Naive thymus-derived CD4-positive, alpha-beta T cell (primary cell): ENCODE measurements at regions of chr22 and their contacts with region 1.

Region 1: GRCh38 chr22:20116951-20117645 is at the start of gene TRMT2A:
- DNase-seq: peak; percentile 93 to 98 (median 97)
- ATAC-seq: peak; percentile 93
- H3K4me3 ChIP-seq: peak within 1 kb of the TSS; percentile 96
- H3K4me3 Mint-ChIP-seq: peak within 1 kb of the TSS; percentile 72 to 98 (median 90)
- H3K27ac ChIP-seq: peak within 1 kb of the TSS; percentile 96
- H3K27ac Mint-ChIP-seq: peak within 1 kb of the TSS; percentile 80 to 97 (median 95)
- H3K4me1 ChIP-seq: peaks cover 23 to 24% of the 10 kb centered on the region in 2 donors
- H3K4me1 Mint-ChIP-seq: peaks cover 20 to 48% (median 39%) of the 10 kb centered on the region in 7 donors
- H3K27me3 ChIP-seq: no peaks in the 10 kb centered on the region
- H3K27me3 Mint-ChIP-seq: peaks cover 0 to 2% (median 0%) of the 10 kb centered on the region in 5 donors
- total RNA-seq, gene TRMT2A: 92.0 to 134 (median 95.8) TPM

Region 2: GRCh38 chr22:19854778-19855503 is 262.2 kb before region 1 on chr22 and contains the starts of genes GNB1L and RTL10:
- CTCF ChIA-PET with region 1: no interaction called
- POLR2A ChIA-PET with region 1: no interaction called
- intact Hi-C with region 1: loop called in 1 of 2 experiments (anchors 1 kb)
- DNase-seq: peak; percentile 91 to 97 (median 94)
- ATAC-seq: peak; percentile 97
- H3K4me3 ChIP-seq: peak within 1 kb of the TSS; percentile 64
- H3K4me3 Mint-ChIP-seq: peak within 1 kb of the TSS; percentile 94 to 99 (median 96)
- H3K27ac ChIP-seq: peak within 1 kb of the TSS; percentile 87
- H3K27ac Mint-ChIP-seq: peak within 1 kb of the TSS; percentile 90 to 96 (median 93)
- H3K4me1 ChIP-seq: peaks cover 19 to 21% of the 10 kb centered on the region in 2 donors
- H3K4me1 Mint-ChIP-seq: peaks cover 38 to 78% (median 65%) of the 10 kb centered on the region in 7 donors
- H3K27me3 ChIP-seq: no peaks in the 10 kb centered on the region
- H3K27me3 Mint-ChIP-seq: no peaks in the 10 kb centered on the region
- total RNA-seq, gene GNB1L: 4.2 to 14.1 (median 9.5) TPM
- total RNA-seq, gene RTL10: 18.2 to 36.8 (median 24.9) TPM

Region 3: DNA sequence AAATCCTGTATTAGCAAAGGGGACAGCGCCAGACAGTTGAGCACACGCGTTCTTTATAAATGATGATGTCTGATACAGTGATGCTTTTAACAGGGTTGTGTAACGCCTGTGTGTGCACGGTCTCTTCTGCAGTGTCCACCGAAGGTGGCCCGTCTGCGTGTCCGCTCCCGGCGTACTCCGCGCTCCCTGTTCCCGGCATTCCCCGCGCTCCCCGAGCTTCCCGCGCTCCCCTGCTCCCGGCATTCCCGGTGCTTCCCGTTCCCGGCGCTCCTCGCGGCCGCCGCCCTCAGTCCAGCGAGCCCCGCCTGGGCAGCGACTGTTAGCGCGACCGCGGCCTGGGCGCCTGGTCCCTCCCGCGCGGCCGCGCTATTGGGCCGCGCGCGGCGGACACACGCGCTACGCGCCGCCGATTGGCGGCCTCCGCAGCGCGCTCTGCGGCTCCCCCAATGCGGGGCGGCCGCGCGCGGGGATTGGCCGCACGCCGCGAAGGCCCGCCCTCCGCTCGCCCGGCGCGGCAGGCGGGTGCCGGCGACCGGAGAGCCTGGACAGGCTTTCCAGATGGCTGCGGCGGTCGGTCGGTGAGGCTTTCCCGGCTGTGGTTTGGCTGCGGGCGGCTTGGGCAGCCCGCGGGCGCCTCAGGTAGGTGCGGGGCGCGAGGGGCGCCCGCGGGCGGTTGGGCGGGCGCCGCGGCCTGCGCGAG is 37.2 kb before region 1 on chr22 and contains the start of gene DGCR8:
- CTCF ChIA-PET with region 1: no interaction called
- POLR2A ChIA-PET with region 1: interaction called, 3 read pairs
- intact Hi-C with region 1: loop called (anchors 1 kb)
- DNase-seq: peak; percentile 48 to 83 (median 75)
- ATAC-seq: peak; percentile 97
- H3K4me3 ChIP-seq: peak within 1 kb of the TSS; percentile 94
- H3K4me3 Mint-ChIP-seq: peak within 1 kb of the TSS; percentile 86 to 96 (median 90)
- H3K27ac ChIP-seq: peak within 1 kb of the TSS; percentile 74
- H3K27ac Mint-ChIP-seq: peak within 1 kb of the TSS; percentile 65 to 95 (median 81)
- H3K4me1 ChIP-seq: peaks cover 12 to 23% of the 10 kb centered on the region in 2 donors
- H3K4me1 Mint-ChIP-seq: peaks cover 29 to 45% (median 41%) of the 10 kb centered on the region in 7 donors
- H3K27me3 ChIP-seq: no peaks in the 10 kb centered on the region
- H3K27me3 Mint-ChIP-seq: no peaks in the 10 kb centered on the region
- total RNA-seq, gene DGCR8: 33.4 to 63.6 (median 41.1) TPM

Region 4: DNA sequence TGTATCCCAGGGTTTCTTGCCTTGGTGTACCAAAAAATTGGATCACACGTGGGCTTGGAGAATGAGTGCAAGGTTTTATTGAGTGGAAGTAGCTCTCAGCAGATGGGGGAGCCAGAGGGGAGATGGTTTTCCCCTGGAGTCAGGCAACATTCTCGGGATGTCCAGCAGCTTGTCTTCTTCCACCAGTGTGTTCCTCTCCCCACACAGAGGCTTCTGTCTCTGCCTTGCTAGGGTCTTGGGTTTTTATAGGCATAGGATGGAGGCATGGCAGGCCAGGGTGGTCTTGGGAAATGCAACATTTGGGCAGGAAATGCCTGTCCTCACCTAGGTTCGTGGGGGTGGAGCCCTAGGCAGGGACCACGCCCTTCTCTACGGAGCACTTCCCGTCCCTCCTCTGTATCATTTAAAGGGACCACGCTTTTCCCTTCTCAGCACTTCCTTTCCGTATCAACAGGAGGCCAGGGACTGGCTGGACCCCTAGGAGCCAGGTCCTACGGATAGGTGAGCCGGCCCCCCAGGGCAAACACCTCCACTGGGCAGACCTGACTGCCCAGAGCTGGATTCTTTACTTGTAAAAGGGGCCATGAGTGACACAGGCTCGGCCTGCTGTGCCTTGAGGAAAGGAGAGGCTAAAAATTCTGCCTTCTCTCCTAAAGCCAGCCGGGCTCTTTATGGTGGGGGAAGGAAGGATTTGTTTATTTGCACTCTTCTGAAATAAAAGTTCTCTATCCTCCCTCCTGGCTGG is 89.0 kb after region 1 on chr22:
- CTCF ChIA-PET with region 1: no interaction called
- POLR2A ChIA-PET with region 1: no interaction called
- intact Hi-C with region 1: loop called in 1 of 2 experiments (anchors 5 kb)
- DNase-seq: peak; percentile 35 to 75 (median 63)
- ATAC-seq: peak; percentile 91
- H3K4me3 ChIP-seq: peak overlapping the region; percentile 96
- H3K4me3 Mint-ChIP-seq: peak overlapping the region; percentile 85 to 98 (median 94)
- H3K27ac ChIP-seq: peak overlapping the region; percentile 83
- H3K27ac Mint-ChIP-seq: peak overlapping the region; percentile 91 to 97 (median 94)
- H3K4me1 ChIP-seq: peaks cover 16 to 24% of the 10 kb centered on the region in 2 donors
- H3K4me1 Mint-ChIP-seq: peaks cover 12 to 36% (median 25%) of the 10 kb centered on the region in 7 donors
- H3K27me3 ChIP-seq: no peaks in the 10 kb centered on the region
- H3K27me3 Mint-ChIP-seq: no peaks in the 10 kb centered on the region

Region 5: GRCh38 chr22:20858615-20859416 is 741.7 kb after region 1 on chr22 and contains the starts of genes PI4KA and SNAP29:
- CTCF ChIA-PET with region 1: no interaction called
- POLR2A ChIA-PET with region 1: no interaction called
- intact Hi-C with region 1: loop called in 1 of 2 experiments (anchors 2 kb)
- DNase-seq: peak; percentile 92 to 98 (median 96)
- ATAC-seq: peak; percentile 97
- H3K4me3 ChIP-seq: peak within 1 kb of the TSS; percentile 78
- H3K4me3 Mint-ChIP-seq: peak within 1 kb of the TSS; percentile 87 to 95 (median 92)
- H3K27ac ChIP-seq: peak within 1 kb of the TSS; percentile 87
- H3K27ac Mint-ChIP-seq: peak within 1 kb of the TSS; percentile 60 to 92 (median 88)
- H3K4me1 ChIP-seq: peaks cover 17 to 20% of the 10 kb centered on the region in 2 donors
- H3K4me1 Mint-ChIP-seq: peaks cover 38 to 76% (median 58%) of the 10 kb centered on the region in 7 donors
- H3K27me3 ChIP-seq: no peaks in the 10 kb centered on the region
- H3K27me3 Mint-ChIP-seq: no peaks in the 10 kb centered on the region
- total RNA-seq, gene PI4KA: 120 to 181 (median 168) TPM
- total RNA-seq, gene SNAP29: 15.2 to 32.8 (median 25.4) TPM

Region 6: DNA sequence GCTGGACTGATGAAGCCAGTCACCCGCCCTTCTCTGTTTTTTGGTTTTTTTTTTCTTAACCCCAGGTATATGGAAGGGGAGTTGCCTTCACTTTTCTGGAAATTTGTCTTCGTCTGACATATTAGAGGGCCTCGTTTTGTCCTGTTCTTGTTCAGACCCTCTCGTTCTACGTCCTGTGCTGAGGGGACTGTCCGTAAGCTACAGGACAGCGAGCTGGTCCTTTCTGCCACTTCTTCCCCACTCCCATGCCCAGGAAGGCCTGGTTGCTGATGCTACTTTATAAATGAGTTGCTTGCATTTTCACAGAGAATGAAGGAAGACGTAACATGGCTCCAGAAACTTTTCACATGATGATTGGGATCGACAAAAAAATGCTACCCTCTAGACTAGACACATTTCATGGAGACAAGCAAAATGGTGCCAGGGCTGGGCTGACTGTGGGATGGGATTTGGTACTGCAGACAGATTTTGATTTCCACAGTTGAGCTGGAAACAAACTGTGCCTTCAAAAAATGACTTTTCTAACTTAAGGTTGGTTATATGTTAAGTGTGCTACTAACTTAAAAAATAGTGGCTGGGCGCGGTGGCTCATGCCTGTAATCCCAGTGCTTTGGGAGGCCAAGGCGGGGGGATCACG is 772.9 kb after region 1 on chr22:
- CTCF ChIA-PET with region 1: no interaction called
- POLR2A ChIA-PET with region 1: no interaction called
- intact Hi-C with region 1: no loop called
- DNase-seq: no peak
- ATAC-seq: no peak
- H3K4me3 ChIP-seq: no peak overlapping the region
- H3K4me3 Mint-ChIP-seq: no peak overlapping the region
- H3K27ac ChIP-seq: no peak overlapping the region
- H3K27ac Mint-ChIP-seq: peak overlapping the region in 1 of 9 donors; percentile 24
- H3K4me1 ChIP-seq: no peaks in the 10 kb centered on the region
- H3K4me1 Mint-ChIP-seq: peaks cover 0 to 2% (median 0%) of the 10 kb centered on the region in 7 donors
- H3K27me3 ChIP-seq: no peaks in the 10 kb centered on the region
- H3K27me3 Mint-ChIP-seq: peaks cover 0 to 2% (median 0%) of the 10 kb centered on the region in 5 donors